Astrocyte of the cerebellum (primary cell): ENCODE measurements at regions of chr9 and their contacts with region 1.

Region 1: GRCh38 chr9:98010445-98010844 is 27.3 kb downstream of the ANP32B start:
- DNase-seq: no peak
- H3K4me3 ChIP-seq: no peak overlapping the region
- CTCF ChIP-seq: no peak

Region 2: GRCh38 chr9:97961361-97961760 is 49.1 kb before region 1 on chr9:
- in situ Hi-C with region 1: loop called (anchors 5 kb)
- DNase-seq: no peak
- H3K4me3 ChIP-seq: no peak overlapping the region
- CTCF ChIP-seq: no peak